ENCODE measurements at regions of chr1 and their contacts with region 1.

Region 1: DNA sequence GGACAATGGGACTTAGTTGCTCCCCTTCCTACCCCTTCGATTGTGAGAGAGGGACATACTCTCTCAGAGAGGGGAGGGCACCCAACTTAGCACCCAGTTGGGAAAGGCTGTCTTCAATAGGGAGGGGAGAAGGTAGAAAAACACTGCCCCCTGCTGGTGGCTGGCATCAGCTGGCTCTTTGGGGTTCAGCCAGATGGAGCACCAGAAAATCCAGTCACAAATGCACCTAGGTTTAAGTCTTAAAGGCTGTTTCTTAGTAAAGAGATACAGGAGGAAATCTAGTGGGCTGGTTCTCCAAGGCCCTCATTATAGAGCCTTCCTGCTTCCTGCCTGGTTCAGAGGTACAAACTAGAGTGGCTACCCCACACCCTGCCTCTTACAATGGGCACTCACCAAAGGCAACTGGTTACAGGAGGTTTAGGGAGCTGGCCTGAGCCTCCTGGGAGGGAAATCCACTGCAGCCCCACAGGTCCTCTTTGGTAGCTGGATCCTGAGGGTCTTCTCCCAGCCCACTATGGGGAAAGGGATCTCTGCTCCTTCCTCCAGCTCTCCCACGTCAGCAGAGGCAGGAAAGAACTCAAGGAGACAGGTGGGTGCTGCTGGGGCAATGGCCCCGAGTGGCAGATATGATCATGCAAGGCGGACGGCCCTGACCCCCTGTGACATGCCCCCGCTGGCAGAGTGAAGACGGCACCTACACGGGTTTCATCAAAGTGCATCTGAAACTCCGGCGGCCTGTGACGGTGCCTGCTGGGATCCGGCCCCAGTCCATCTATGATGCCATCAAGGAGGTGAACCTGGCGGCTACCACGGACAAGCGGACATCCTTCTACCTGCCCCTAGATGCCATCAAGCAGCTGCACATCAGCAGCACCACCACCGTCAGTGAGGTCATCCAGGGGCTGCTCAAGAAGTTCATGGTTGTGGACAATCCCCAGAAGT is 28.3 kb downstream of the EIF2D start:
- DNase-seq: peak; percentile 79
- H3K4me3 ChIP-seq: no peak overlapping the region
- H3K27ac ChIP-seq: no peak overlapping the region
- H3K4me1 ChIP-seq: peaks cover 8% of the 10 kb centered on the region
- H3K27me3 ChIP-seq: no peaks in the 10 kb centered on the region
- CTCF ChIP-seq: peak; percentile 91 to 96 (median 94)
- POLR2A ChIP-seq: no peak

Region 2: DNA sequence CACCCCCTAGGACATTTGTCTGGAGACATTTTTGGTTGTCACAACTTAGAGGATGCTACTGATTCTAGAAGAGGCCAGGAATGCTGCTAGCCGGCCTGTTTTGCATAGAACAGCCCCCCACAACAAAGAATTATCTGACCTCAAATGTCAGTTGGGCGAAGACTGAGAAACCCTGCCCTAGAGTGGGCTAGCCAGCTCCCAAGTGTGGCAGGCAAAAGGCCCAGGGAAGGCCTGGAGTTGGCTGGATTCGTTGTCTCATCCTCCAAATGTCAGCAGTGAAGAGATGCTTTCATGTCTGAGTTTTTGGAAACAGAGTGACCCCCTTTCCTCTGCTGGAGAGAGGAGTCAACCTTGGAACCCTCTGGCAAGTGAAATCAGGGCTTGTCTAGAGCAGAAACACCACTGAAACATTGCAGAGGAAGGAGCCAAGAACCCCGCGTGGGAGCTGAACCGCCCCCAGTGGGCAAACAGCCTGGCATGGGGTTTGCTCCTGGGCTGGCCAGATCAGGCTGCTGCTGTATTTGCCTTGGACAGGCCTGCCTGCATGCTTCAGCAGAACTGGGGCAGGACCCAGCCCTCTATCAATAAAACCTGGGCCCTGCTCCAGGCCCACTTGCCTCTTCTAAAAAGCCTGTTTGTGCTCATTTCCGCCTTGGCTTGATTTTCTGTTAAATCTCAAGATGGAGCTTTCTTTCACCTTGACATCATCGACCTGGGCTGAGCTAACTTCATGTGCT is 43.8 kb before region 1 on chr1:
- intact Hi-C with region 1: loop called (anchors 2 kb)
- DNase-seq: peak; percentile 96
- H3K4me3 ChIP-seq: no peak overlapping the region
- H3K27ac ChIP-seq: peak overlapping the region; percentile 60 to 66
- H3K4me1 ChIP-seq: peaks cover 19% of the 10 kb centered on the region
- H3K27me3 ChIP-seq: no peaks in the 10 kb centered on the region
- CTCF ChIP-seq: peak in 1 of 4 experiments; percentile 10
- POLR2A ChIP-seq: peak; percentile 35

Measured in prostate gland (tissue), 2 donors.